Activated CD8-positive, alpha-beta T cell treated with anti-CD3 and anti-CD28 coated beads, Interleukin-2, amount 10 ng/mL, durations not matched to agents 7 days and 5 days (primary cell): ENCODE measurements at regions of chr14 and their contacts with region 1.

Region 1: GRCh38 chr14:50060871-50061663 is 55.3 kb downstream of the VCPKMT start:
- DNase-seq: peak; percentile 70
- ATAC-seq: peak; percentile 23
- H3K4me3 Mint-ChIP-seq: peak overlapping the region; percentile 95
- H3K27ac Mint-ChIP-seq: peak overlapping the region; percentile 99
- H3K4me1 Mint-ChIP-seq: peaks cover 94% of the 10 kb centered on the region
- H3K27me3 Mint-ChIP-seq: no peaks in the 10 kb centered on the region

Region 2: GRCh38 chr14:49852301-49853157 is 208.5 kb before region 1 on chr14 and contains the start of gene NEMF:
- CTCF ChIA-PET with region 1: interaction called, 16 read pairs
- POLR2A ChIA-PET with region 1: interaction called, 16 read pairs
- DNase-seq: peak; percentile 91
- ATAC-seq: peak; percentile 84
- H3K4me3 Mint-ChIP-seq: peak within 1 kb of the TSS; percentile 97
- H3K27ac Mint-ChIP-seq: peak within 1 kb of the TSS; percentile 98
- H3K4me1 Mint-ChIP-seq: peaks cover 41% of the 10 kb centered on the region
- H3K27me3 Mint-ChIP-seq: no peaks in the 10 kb centered on the region
- total RNA-seq, gene NEMF: 75.6 to 78.9 TPM

Region 3: DNA sequence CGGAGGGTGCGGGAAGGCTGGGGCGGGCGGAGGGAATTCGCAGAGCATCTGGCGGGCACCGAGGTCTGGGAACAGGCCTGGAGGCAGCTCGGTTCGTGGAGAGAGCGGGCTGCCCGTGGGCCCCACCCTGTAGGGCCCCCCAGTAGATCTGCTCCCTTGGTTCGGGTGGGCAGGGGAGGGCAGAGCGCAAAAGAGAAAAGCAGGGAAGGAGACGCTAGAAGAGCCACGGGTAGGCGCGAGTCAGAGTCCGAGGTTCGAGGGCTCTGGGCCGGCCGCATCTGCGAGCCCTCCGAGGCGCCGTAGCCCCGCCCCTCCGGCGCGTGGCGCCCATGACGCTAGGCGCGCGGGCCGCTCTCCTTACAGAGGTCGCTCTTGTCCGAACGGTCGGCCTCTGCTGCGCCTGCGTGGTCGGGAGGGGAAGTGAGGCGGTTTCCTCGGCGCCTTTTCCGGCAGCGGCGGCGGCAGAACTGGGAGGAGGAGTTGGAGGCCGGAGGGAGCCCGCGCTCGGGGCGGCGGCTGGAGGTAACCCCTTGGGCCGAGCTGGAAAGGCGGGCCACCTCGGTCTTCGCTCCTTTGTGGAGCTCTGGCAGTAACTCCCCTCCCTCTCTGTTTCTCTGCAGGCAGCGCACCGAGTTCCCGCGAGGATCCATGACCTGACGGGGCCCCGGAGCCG is 168.3 kb before region 1 on chr14 and contains the start of gene ARF6:
- CTCF ChIA-PET with region 1: interaction called, 5 read pairs
- POLR2A ChIA-PET with region 1: interaction called, 25 read pairs
- DNase-seq: peak; percentile 98
- ATAC-seq: peak; percentile 89
- H3K4me3 Mint-ChIP-seq: peak within 1 kb of the TSS; percentile 90
- H3K27ac Mint-ChIP-seq: peak within 1 kb of the TSS; percentile 97
- H3K4me1 Mint-ChIP-seq: peaks cover 17% of the 10 kb centered on the region
- H3K27me3 Mint-ChIP-seq: no peaks in the 10 kb centered on the region
- total RNA-seq, gene ARF6: 183 to 193 TPM

Region 4: DNA sequence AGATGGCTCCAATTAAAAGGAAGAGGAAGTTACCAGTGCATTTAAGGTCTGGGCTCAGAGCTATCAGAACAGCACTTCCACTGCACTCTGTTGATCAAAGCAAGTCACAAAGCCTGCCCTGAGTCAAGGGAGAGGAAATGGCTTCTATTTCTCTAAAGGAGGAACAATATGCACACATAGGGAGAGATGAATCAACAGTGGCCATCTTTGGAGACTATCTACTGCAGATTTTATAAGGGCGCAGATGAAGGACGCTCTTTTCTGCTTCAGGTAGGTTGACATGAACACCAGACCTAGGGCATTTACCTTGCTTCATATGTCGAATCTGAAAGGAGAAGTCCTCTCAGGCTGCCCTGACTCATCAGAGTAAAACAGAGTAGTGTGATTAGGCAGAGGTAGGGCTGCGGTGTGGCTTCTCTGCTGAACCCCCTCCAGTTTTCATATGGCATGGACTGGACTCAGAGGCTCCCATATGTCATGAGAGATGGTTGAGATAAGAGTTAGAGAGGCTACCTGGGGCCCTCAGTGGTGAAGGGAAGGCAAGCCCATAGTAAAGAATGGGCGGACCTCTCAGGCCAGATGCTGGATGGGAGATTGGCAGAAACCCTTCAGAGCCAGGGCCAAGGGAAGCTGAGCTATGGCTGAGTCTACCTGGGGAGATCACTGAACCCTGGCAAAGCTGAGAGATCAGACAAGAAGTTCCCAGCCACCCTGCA is 83.8 kb before region 1 on chr14:
- CTCF ChIA-PET with region 1: interaction called, 15 read pairs
- POLR2A ChIA-PET with region 1: interaction called, 47 read pairs
- DNase-seq: peak; percentile 54
- ATAC-seq: peak; percentile 72
- H3K4me3 Mint-ChIP-seq: peak overlapping the region; percentile 62
- H3K27ac Mint-ChIP-seq: peak overlapping the region; percentile 87
- H3K4me1 Mint-ChIP-seq: peaks cover 78% of the 10 kb centered on the region
- H3K27me3 Mint-ChIP-seq: no peaks in the 10 kb centered on the region

Region 5: GRCh38 chr14:50045039-50045711 is 15.9 kb before region 1 on chr14:
- CTCF ChIA-PET with region 1: interaction called, 38 read pairs
- POLR2A ChIA-PET with region 1: interaction called, 78 read pairs
- DNase-seq: peak; percentile 91
- ATAC-seq: peak; percentile 84
- H3K4me3 Mint-ChIP-seq: peak overlapping the region; percentile 13
- H3K27ac Mint-ChIP-seq: peak overlapping the region; percentile 89
- H3K4me1 Mint-ChIP-seq: peaks cover 75% of the 10 kb centered on the region
- H3K27me3 Mint-ChIP-seq: no peaks in the 10 kb centered on the region

Region 6: DNA sequence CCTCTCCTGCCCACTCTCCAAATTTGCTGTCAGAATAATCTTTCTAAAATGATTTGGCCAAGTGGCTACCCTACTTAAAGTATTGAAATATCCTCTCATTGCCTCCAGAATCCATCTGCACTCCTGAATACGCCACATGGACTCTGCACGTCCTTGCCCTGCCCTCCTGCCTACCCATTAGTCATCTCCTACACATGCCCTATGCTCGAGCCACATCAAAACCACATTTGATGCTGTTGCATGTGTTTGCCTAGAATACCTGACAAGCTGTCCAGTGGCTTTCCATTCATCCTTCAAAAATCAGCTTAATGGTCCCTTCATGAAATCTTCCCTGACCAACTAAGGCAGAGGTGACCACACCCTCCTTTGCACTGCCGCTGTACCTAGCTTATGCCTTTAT is 38.3 kb after region 1 on chr14:
- CTCF ChIA-PET with region 1: interaction called, 22 read pairs
- POLR2A ChIA-PET with region 1: interaction called, 19 read pairs
- DNase-seq: no peak
- ATAC-seq: no peak
- H3K4me3 Mint-ChIP-seq: no peak overlapping the region
- H3K27ac Mint-ChIP-seq: peak overlapping the region; percentile 33
- H3K4me1 Mint-ChIP-seq: peaks cover 85% of the 10 kb centered on the region
- H3K27me3 Mint-ChIP-seq: no peaks in the 10 kb centered on the region